T-cell (primary cell): ENCODE measurements at regions of chr6 and their contacts with region 1.

Region 1: DNA sequence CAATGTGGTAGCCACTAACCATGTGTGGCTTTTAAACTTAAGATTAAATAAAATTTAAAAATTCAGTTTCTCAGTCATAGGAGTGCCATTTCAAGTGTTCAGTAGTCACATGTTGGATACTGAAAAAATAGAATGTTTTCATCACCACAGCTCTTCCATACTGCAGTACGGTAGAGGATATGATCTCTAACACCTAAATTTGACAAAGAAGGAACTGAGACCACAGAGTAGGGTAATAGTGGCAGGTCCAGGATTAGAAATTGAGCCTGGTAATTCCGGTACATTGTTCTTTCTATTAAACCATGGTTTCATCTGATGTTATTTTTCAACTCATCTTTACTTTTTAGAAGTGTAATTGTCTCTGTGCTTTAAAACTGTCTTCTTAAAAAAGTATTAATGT is 104.0 kb downstream of the CD2AP start:
- DNase-seq: no peak
- ATAC-seq: no peak
- H3K4me3 ChIP-seq: no peak overlapping the region
- H3K4me3 Mint-ChIP-seq: no peak overlapping the region
- H3K27ac ChIP-seq: no peak overlapping the region
- H3K27ac Mint-ChIP-seq: no peak overlapping the region
- H3K4me1 ChIP-seq: no peaks in the 10 kb centered on the region
- H3K4me1 Mint-ChIP-seq: no peaks in the 10 kb centered on the region
- H3K27me3 ChIP-seq: no peaks in the 10 kb centered on the region
- H3K27me3 Mint-ChIP-seq: no peaks in the 10 kb centered on the region

Region 2: DNA sequence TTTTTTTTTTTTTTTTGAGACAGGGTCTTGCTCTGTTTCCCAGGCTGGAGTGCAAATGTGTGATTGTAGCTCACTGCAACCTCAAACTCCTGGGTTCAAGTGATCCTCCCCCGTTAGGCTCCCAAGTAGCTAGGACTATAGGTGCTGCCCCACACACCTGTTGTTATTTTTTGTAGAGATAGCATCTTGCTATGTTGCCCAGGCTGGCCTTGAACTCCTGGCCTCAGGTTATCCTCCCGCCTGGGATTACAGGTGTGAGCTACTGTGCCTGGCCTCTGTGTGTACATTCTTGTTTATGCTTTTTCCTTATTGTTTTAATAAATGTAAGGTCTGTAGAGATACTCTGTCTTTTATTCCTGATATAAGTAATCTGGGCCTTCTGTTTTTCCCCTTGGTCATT is 89.2 kb before region 1 on chr6:
- CTCF ChIA-PET with region 1: no interaction called
- POLR2A ChIA-PET with region 1: interaction called in 1 of 2 experiments, 12 read pairs
- DNase-seq: no peak
- ATAC-seq: no peak
- H3K4me3 ChIP-seq: no peak overlapping the region
- H3K4me3 Mint-ChIP-seq: no peak overlapping the region
- H3K27ac ChIP-seq: no peak overlapping the region
- H3K27ac Mint-ChIP-seq: no peak overlapping the region
- H3K4me1 ChIP-seq: peaks cover 0 to 7% of the 10 kb centered on the region in 2 experiments
- H3K4me1 Mint-ChIP-seq: peaks cover 63 to 75% (median 70%) of the 10 kb centered on the region in 3 donors
- H3K27me3 ChIP-seq: no peaks in the 10 kb centered on the region
- H3K27me3 Mint-ChIP-seq: no peaks in the 10 kb centered on the region

Region 3: DNA sequence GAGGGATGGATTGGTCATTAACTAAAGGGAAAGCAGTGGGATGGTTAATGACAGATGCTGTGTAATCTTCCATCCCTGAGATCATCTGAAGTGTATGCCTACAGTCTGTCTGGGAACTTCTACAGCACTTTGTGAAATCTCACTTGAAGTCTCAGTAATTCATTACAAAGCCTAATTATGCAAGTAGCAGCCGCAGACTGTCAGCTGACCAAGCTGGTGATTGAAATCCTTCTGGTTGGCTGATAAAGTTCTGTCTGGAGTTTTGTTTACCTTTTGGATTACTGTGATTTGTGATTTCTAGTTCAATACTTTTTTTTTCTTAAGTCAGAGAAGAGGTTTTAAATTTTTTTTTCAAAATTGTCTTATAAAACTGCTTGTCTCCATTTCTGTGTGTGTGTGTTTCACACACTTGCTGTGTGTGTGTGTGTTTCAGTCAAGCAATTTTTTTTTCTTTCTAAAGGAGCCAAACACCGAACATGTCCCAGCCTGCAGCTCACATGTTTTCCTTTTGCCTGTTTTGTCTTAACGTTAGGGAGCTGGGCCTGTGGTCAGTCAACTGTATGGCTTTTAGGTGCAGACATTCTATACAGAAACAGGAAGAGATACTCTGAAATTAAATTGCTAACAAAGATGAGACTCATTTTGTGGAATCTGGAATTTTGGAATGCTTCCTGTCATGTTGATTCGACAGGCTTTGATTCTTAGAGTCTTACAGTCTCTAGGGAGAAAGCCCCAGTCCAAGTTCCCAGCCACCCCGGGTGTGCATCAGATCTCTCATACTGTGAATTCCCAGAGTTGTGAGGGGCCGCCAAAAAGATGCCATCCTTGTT is 88.3 kb after region 1 on chr6:
- CTCF ChIA-PET with region 1: no interaction called
- POLR2A ChIA-PET with region 1: no interaction called
- DNase-seq: no peak
- ATAC-seq: no peak
- H3K4me3 ChIP-seq: no peak overlapping the region
- H3K4me3 Mint-ChIP-seq: no peak overlapping the region
- H3K27ac ChIP-seq: no peak overlapping the region
- H3K27ac Mint-ChIP-seq: no peak overlapping the region
- H3K4me1 ChIP-seq: no peaks in the 10 kb centered on the region
- H3K4me1 Mint-ChIP-seq: no peaks in the 10 kb centered on the region
- H3K27me3 ChIP-seq: no peaks in the 10 kb centered on the region
- H3K27me3 Mint-ChIP-seq: peaks cover 35 to 50% of the 10 kb centered on the region in 2 donors